HepG2 (cell line): ENCODE measurements at regions of chr2 and their contacts with region 1.

Region 1: DNA sequence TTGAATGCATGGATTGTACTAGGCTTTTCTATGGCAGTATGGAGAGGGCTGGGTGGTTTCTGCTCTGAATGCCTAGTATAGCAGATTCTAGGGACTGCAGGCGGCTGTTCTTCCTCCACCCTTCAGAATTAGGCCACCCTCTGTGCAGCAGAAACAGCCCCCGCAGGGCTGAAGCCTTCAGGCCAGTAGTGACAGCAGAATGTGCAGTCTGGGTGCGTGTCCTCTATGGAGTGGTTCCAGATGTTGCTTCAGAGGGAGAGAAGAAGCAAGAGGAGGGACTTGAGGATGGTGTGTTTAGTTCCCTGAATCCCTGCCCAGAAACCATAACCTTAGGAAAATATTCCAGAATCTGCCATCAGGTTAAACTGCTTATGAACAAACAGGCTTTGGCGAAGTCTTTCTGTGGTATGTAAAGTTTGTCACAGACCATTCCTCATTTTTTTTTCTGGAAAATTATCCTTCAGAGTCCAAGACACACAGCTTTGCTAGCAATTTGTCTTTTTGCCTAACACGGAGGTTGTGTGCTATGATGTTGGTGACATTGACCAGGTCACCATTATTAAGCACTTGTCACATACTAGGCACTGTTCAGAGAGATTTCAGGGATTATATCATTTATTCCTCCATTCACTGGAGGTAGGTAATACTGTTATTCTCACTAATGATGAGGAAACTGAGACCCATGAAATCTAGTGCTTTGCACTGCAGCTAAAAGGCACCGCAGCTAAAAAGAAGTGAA is 21.1 kb downstream of the CASP10 start:
- DNase-seq: no peak
- ATAC-seq: peak; percentile 28
- H3K4me3 ChIP-seq: peak overlapping the region; percentile 11 to 53 (median 12); a peak in 4 of 6 replicates
- H3K27ac ChIP-seq: peak overlapping the region; percentile 97
- H3K4me1 ChIP-seq: peaks cover 52% of the 10 kb centered on the region
- H3K27me3 ChIP-seq: no peaks in the 10 kb centered on the region
- CTCF ChIP-seq: no peak
- EP300 ChIP-seq: no peak
- POLR2A ChIP-seq: no peak; a peak in 1 of 4 replicates
- RAD21 ChIP-seq: no peak

Region 2: GRCh38 chr2:201220102-201220570 is 16.1 kb after region 1 on chr2:
- CTCF ChIA-PET with region 1: no interaction called
- POLR2A ChIA-PET with region 1: interaction called, 11 read pairs
- in situ Hi-C with region 1: no loop called
- intact Hi-C with region 1: no loop called
- DNase-seq: no peak
- ATAC-seq: no peak
- H3K4me3 ChIP-seq: no peak overlapping the region
- H3K27ac ChIP-seq: no peak overlapping the region
- H3K4me1 ChIP-seq: peaks cover 22% of the 10 kb centered on the region
- H3K27me3 ChIP-seq: no peaks in the 10 kb centered on the region
- CTCF ChIP-seq: no peak
- EP300 ChIP-seq: no peak
- POLR2A ChIP-seq: no peak
- RAD21 ChIP-seq: no peak

Region 3: DNA sequence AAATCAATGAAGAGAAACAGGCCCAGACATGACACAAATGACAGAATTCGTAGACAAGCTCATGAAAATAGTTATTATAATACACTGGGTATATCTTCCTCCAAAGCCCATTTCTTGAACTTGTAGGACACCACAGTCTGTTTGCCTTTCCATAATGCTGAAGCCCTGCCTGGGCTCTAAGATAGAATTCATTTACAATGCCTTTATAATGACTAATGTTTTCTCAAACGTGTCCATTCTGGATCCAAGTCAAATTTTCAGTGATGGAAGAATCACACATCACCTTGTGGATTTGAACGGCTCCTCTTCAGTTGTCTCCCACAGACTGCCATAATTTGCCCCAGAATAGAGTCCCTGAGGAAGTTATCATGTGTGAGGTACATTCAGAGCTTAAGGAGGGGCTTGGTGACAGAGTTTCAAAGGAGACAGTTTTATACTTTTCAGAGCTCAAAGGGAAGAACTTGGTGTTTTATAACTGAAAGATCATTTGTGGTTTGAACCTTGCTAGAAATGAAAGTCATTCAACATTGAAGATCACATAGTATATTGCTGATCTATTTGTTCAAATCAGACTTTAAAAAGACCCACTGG is 94.5 kb after region 1 on chr2:
- CTCF ChIA-PET with region 1: no interaction called
- POLR2A ChIA-PET with region 1: no interaction called
- in situ Hi-C with region 1: no loop called
- intact Hi-C with region 1: no loop called
- DNase-seq: no peak
- ATAC-seq: no peak
- H3K4me3 ChIP-seq: no peak overlapping the region
- H3K27ac ChIP-seq: no peak overlapping the region
- H3K4me1 ChIP-seq: no peaks in the 10 kb centered on the region
- H3K27me3 ChIP-seq: no peaks in the 10 kb centered on the region
- CTCF ChIP-seq: no peak
- EP300 ChIP-seq: no peak
- POLR2A ChIP-seq: no peak
- RAD21 ChIP-seq: no peak

Region 4: DNA sequence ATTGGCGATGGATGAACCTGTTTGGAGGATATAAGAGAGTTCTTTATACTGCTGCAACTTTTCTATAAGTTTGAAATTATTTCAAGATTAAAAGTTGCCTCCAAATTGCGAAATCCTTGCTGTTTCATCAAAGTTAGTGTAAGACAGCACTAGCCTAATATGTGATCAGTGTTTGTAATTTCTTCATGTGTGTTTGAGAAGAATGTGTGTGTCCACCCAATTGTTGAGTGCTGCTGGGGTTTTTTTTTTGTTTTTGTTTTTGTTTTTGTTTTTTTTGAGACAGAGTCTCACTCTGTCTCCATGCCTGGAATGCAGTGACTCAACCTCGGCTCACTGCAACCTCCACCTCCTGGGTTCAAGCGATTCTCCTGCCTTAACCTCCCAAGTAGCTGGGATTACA is 635.6 kb after region 1 on chr2:
- CTCF ChIA-PET with region 1: no interaction called
- POLR2A ChIA-PET with region 1: no interaction called
- in situ Hi-C with region 1: no loop called
- intact Hi-C with region 1: no loop called
- DNase-seq: no peak
- ATAC-seq: no peak
- H3K4me3 ChIP-seq: no peak overlapping the region
- H3K27ac ChIP-seq: no peak overlapping the region
- H3K4me1 ChIP-seq: no peaks in the 10 kb centered on the region
- H3K27me3 ChIP-seq: no peaks in the 10 kb centered on the region
- CTCF ChIP-seq: no peak
- EP300 ChIP-seq: no peak
- POLR2A ChIP-seq: no peak
- RAD21 ChIP-seq: no peak